Common myeloid progenitor, CD34-positive (primary cell): ENCODE measurements at regions of chr10 and their contacts with region 1.

Region 1: DNA sequence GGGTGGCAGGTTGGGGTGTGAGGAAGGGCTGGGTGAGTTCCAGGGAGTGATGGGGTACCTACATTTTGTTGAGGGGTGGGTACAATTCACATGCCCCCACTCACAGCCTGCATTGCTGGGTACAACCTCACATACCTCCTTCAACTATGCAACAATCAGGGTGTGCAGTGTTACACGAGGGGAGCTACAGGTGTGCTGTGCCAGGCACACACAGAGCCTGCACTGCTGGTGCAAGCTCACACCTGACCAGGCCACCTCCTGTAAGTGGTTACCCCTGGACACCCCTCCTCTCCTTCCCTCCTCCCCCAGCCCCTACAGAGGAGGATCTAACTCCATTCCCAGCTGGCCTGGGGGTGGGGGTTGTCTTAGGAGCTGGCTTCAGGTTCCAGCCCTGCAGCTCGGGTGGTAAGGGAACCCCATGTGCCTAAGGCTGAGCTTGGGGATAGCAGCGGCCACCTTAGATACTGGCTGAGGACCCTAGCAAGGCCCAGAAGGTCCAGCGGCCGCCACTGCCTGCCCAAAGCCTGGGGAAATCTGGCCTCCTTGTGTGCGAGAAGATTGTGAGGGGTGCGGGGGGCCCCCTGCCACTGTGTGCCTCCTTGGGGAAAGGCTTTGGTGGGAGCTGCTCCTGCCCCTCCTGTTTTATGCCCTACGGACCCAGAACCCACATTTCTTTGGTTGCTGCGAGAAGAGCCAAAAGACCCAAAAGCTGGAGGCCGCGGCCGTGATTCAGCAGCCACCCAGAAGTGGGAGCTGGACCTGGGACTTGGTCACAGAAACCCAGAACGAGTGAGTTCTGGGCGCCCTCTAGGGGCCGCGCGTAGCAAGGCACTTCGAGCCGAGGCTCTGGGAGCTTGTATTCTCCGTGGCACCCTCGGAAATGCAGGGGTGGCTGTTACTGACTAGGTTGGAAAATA is 10.8 kb downstream of the TLX1 start:
- DNase-seq: peak; percentile 80 to 89 (median 83)
- H3K4me3 ChIP-seq: no peak overlapping the region
- H3K27ac ChIP-seq: no peak overlapping the region
- H3K4me1 ChIP-seq: peaks cover 0 to 9% (median 4%) of the 10 kb centered on the region in 4 experiments
- H3K27me3 ChIP-seq: peaks cover 12 to 100% (median 71%) of the 10 kb centered on the region in 5 experiments

Region 2: DNA sequence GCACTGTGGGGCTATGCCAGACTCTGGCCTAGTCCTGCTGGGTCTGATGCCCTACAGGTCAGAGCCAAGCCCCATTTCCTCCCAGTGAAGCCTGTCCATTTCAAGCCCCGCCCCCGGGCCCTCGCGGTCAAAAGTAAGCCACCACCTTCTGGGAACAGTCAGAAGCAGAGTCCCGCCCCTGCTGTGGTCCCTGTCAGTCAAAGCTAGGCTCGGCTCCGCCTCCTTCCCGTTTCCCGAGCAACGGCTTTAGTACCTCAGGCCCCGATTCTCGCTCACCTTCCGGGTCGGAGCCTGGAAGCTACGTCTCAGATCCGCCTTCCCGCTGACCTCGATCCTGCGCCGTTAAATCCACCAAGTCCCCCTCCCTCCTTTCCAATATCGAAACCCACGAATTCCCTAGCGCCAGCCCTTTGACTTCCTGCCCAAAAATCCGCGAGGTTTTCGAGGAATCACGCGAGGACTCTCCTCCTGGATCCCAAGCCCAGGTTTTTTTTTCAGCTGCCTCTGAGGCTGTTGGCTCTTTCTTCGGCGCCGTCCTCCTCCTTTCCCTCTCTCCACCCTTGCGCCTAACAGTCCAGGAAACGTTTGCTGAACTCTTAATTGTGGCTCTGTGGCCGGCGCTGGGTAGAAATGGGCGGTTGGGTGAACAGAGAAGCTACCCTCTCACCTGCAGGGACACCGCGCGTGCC is 99.1 kb before region 1 on chr10:
- CTCF ChIA-PET with region 1: interaction called, 21 read pairs
- POLR2A ChIA-PET with region 1: no interaction called
- DNase-seq: peak; percentile 87 to 90 (median 89)
- H3K4me3 ChIP-seq: peak overlapping the region; percentile 50 to 91 (median 80)
- H3K27ac ChIP-seq: peak overlapping the region; percentile 51 to 81
- H3K4me1 ChIP-seq: peaks cover 0 to 27% (median 19%) of the 10 kb centered on the region in 4 experiments
- H3K27me3 ChIP-seq: peaks cover 2 to 21% (median 13%) of the 10 kb centered on the region in 5 experiments

Region 3: GRCh38 chr10:101060036-101060950 is 81.6 kb before region 1 on chr10:
- CTCF ChIA-PET with region 1: interaction called, 61 read pairs
- POLR2A ChIA-PET with region 1: no interaction called
- DNase-seq: peak; percentile 88 to 92 (median 92)
- H3K4me3 ChIP-seq: peak overlapping the region; percentile 83 to 98 (median 91)
- H3K27ac ChIP-seq: peak overlapping the region; percentile 97 to 98
- H3K4me1 ChIP-seq: peaks cover 5 to 63% (median 58%) of the 10 kb centered on the region in 4 experiments
- H3K27me3 ChIP-seq: peaks cover 0 to 3% (median 0%) of the 10 kb centered on the region in 5 experiments

Region 4: DNA sequence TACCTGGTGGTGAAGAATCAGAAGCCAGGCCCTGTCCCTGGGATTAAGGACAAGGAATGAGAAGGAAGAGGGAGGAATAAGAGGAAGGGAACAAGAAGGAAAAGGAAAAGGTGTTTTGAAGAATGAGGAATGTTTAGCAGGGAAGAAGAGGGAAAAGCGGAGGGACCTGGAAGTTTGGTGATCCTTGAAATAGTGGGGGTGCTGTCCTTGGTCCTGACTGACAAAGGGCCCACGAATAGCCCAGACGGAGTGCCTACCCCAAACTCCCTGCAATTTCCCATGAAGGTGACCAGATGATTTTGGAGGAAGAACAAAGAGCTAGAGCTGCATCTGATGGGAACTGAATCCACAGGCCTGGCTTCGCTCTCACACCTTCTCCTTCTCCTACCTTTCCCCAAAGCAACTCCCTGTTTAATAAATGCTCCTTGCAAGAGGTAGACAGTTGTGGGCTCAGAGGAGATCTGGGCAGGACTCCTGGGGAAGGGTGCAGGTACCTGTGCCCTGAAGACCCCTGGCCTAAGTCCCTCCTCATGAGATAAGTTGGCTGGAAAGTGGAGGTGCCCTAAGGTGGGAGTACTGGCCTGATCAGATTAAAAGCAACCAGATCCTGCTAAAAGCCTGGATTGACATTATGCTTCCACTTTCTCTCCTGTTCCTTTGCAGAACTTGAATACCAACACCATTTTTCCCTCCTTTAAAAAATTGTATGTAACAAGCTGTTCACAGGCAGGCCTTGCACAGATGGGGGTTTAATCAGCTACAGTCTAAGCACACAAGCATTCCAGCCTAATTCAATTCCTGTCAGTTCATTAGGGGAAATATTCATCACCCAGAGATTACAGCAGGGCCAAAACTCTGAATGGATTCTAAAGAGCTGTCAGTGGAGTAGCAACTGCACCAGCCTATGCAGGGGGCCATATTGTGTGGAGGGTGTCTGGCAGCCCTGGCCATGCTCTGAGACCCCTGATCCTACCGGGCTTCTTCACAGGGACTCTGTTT is 60.6 kb before region 1 on chr10:
- CTCF ChIA-PET with region 1: interaction called, 13 read pairs
- POLR2A ChIA-PET with region 1: interaction called, 3 read pairs
- DNase-seq: peak in 2 of 3 donors; percentile 42 to 43
- H3K4me3 ChIP-seq: no peak overlapping the region
- H3K27ac ChIP-seq: no peak overlapping the region
- H3K4me1 ChIP-seq: no peaks in the 10 kb centered on the region
- H3K27me3 ChIP-seq: peaks cover 6 to 85% (median 28%) of the 10 kb centered on the region in 5 experiments

Region 5: GRCh38 chr10:101095542-101096213 is 46.2 kb before region 1 on chr10:
- CTCF ChIA-PET with region 1: interaction called, 434 read pairs
- POLR2A ChIA-PET with region 1: interaction called, 4 read pairs
- DNase-seq: peak; percentile 57 to 72 (median 60)
- H3K4me3 ChIP-seq: no peak overlapping the region
- H3K27ac ChIP-seq: no peak overlapping the region
- H3K4me1 ChIP-seq: no peaks in the 10 kb centered on the region
- H3K27me3 ChIP-seq: peaks cover 2 to 88% (median 23%) of the 10 kb centered on the region in 5 experiments

Region 6: DNA sequence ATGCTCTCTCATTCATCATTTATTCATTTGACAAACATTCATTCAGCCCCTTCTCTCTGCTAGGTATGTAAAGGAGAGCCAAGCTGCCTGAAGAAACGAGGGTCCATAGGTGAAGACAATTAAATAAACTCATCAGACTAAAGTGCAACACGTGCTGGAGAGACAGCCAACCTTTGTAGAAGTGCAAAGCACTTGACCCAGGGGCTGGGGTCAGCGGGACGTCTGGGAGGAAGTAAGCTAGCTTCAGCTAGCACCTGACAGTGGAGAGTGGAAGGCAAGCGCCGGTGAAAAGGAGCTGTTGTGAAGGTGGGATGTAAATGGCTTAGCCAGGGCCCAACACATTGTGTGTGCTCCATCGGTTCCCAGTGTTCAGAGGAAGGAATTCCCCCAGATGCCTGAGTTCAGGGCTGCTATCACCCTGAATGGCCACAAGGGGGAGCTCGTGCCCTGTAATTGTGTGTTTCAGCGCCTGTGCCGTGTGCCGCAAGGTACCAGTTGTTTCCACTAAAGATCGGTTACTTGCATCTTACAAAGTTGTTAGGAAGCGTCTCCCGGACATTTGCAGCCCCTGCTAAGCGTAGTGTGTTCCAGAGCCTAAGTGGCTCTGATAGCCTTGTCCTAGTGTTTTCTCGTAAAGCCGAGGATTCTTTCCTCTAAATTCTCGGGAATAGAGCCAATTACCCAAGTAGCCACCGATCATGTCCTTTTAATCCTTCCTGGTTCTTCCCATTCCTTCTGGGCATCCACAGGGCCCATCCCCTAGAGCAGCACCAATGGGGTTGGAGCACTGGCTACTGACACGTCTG is 19.8 kb after region 1 on chr10:
- CTCF ChIA-PET with region 1: interaction called, 74 read pairs
- POLR2A ChIA-PET with region 1: no interaction called
- DNase-seq: peak; percentile 71 to 86 (median 81)
- H3K4me3 ChIP-seq: no peak overlapping the region
- H3K27ac ChIP-seq: no peak overlapping the region
- H3K4me1 ChIP-seq: peaks cover 0 to 2% (median 0%) of the 10 kb centered on the region in 4 experiments
- H3K27me3 ChIP-seq: peaks cover 26 to 94% (median 31%) of the 10 kb centered on the region in 5 experiments